Heart left ventricle (tissue), 16 donors: ENCODE measurements at regions of chr5 and their contacts with region 1.

Region 1: DNA sequence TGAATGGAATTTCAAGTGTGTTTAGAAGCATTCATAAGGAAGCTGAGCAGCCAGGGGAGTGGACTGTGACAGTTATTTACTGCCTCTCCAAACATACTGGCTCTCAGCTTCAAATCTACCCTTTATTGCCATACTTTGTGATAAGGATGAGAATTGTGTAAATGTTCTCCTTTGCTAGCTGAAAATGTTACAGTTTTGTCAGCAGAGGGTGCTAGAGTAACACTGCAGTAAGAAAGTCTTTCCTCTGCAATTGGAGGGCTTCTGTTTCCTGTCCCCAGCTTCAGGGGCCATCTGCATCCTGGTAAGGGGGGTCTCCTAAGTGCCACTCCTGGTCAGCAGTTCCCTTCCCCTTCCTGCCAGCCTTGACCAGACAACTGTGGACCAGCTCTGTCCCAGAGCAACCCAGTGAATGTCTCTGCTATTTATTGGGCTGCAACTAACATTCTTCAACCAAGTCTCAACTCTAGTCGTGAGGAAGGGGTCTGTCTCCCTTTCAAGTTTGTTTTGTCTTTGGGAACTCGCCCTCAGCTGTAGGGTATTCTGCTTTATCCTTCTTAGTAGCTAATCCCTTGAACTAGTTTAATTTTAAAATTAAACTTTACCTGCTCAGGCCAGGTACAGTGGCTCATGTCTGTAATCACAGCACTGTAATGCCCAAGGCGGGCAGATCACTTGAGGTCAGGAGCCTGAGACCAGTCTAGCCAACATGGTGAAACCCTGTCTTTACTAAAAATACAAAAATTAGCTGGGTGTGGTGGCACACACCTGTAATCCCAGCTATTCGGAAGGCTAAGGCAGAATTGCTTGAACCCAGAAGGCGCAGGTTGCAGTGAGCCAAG is 45.3 kb downstream of the RAPGEF6 start:
- DNase-seq: peak in 1 of 5 donors; percentile 25
- ATAC-seq: peak in 3 of 4 donors; percentile 63 to 68 (median 68)
- H3K4me3 ChIP-seq: no peak overlapping the region
- H3K27ac ChIP-seq: no peak overlapping the region
- H3K4me1 ChIP-seq: peaks cover 0 to 21% (median 17%) of the 10 kb centered on the region in 12 donors
- H3K27me3 ChIP-seq: no peaks in the 10 kb centered on the region
- CTCF ChIP-seq: peak; percentile 72 to 95 (median 85)
- POLR2A ChIP-seq: no peak

Region 2: DNA sequence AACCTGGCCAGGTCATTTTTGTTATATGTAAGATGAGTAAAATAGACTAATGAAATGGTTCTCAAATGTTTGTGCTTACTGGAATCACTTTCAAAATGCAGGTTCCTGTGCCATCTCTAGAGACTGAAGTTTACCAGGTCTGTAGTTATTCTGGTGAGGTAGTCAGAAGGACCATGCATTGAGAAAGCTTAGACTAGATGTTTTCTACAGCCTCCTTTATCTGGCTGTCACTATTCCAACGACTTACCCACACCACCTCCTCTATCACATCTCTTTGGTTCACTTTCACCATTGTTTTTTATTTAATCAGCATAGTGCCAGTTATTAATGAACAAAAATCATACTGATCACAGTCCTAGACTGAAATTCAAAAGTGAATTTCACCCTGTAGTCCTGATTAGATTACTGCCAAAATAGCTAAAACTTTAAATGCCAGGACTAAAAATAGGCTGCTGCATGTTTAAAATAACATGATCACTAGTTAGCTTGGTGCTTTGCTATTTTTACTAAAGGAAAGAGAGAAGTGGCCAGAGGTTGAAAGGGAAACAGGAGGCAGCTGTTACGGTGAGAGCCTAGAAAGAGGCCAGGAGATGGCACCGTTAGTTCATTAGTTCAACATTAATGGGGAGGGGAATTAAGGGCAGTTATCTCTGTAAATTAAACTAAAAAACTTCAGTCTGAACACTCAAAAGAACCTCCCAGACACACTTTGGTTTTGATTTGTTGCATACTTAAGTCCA is 221.0 kb after region 1 on chr5:
- intact Hi-C with region 1: loop called in 3 of 10 experiments (anchors 10 kb)
- DNase-seq: peak in 2 of 5 donors; percentile 17 to 29
- ATAC-seq: peak; percentile 76 to 88 (median 88)
- H3K4me3 ChIP-seq: peak overlapping the region in 1 of 12 donors; percentile 6
- H3K27ac ChIP-seq: peak overlapping the region in 9 of 12 donors; percentile 38 to 84 (median 57)
- H3K4me1 ChIP-seq: peaks cover 0 to 21% (median 9%) of the 10 kb centered on the region in 12 donors
- H3K27me3 ChIP-seq: no peaks in the 10 kb centered on the region
- CTCF ChIP-seq: peak in 10 of 12 donors; percentile 12 to 54 (median 38)
- POLR2A ChIP-seq: no peak